Lower leg skin (tissue), 4 donors: ENCODE measurements at regions of chr12 and their contacts with region 1.

Region 1: GRCh38 chr12:55619354-55620138 is 17.1 kb upstream of the OR10P1 start:
- DNase-seq: peak in 1 of 2 donors; percentile 53
- H3K4me3 ChIP-seq: no peak overlapping the region
- CTCF ChIP-seq: no peak
- POLR2A ChIP-seq: no peak

Region 2: DNA sequence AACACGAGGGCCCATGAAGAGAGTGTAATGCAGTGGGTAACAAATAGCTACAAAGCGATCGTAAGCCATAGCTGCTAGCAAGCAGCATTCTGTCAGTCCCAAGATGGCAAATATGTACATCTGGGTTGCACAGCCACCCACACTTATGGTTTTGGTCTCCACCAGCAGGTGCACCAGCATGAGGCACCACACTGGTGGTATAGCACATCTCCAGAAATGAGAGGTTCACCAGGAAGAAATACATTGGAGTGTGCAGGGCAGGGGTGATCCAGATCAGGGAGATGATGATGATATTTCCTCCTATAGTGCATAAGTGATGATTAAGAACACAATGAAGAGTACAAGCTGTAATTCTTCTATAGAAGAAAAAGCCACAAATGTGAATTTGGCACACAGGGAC is 425.2 kb before region 1 on chr12:
- intact Hi-C with region 1: loop called (anchors 5 kb)
- DNase-seq: no peak
- H3K4me3 ChIP-seq: no peak overlapping the region
- CTCF ChIP-seq: no peak
- POLR2A ChIP-seq: no peak

Region 3: GRCh38 chr12:55554296-55554695 is 65.2 kb before region 1 on chr12:
- intact Hi-C with region 1: no loop called
- DNase-seq: no peak
- H3K4me3 ChIP-seq: no peak overlapping the region
- CTCF ChIP-seq: no peak
- POLR2A ChIP-seq: no peak